Right cardiac atrium (tissue), 5 donors: ENCODE measurements at regions of chr14 and their contacts with region 1.

Region 1: GRCh38 chr14:38721822-38722431 is 381.1 kb downstream of the SEC23A start:
- DNase-seq: peak; percentile 38 to 79 (median 47)
- ATAC-seq: peak; percentile 79 to 84
- H3K4me3 ChIP-seq: no peak overlapping the region
- H3K27ac ChIP-seq: no peak overlapping the region
- H3K4me1 ChIP-seq: no peaks in the 10 kb centered on the region
- H3K27me3 ChIP-seq: no peaks in the 10 kb centered on the region

Region 2: GRCh38 chr14:38867561-38868150 is 145.7 kb after region 1 on chr14:
- intact Hi-C with region 1: loop called in 3 of 4 experiments (anchors 5 to 10 kb)
- DNase-seq: peak; percentile 58 to 79 (median 61)
- ATAC-seq: peak; percentile 89 to 90
- H3K4me3 ChIP-seq: no peak overlapping the region
- H3K27ac ChIP-seq: no peak overlapping the region
- H3K4me1 ChIP-seq: no peaks in the 10 kb centered on the region
- H3K27me3 ChIP-seq: no peaks in the 10 kb centered on the region

Region 3: DNA sequence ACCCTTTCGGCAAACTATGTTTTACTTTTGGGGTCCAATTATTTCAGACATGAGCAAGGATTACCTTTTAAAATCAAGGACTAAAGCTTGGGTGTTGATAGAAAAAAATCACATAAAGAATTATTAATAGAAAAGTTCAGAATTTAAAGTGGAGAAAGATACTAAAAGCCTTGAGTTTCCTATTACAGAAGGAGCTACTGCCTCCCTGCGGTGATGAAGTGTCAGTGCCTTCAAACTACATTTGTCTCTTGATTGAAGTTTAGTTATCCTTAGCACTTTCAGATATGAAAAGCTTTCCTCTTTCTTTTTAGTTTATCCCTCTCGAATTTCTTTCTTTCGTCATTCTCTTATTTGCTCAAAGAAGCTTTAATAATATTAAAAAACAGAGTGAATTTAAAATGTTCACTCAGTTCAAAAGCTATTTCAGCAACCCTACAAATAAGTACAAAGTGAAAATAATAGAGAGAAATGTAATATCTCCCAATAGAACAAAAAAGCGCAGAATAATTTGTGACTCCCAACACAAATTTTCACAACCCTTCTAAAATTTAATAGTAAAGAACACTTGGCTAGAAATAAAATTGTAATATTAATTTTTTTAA is 293.5 kb after region 1 on chr14:
- intact Hi-C with region 1: loop called in 3 of 4 experiments (anchors 5 kb)
- DNase-seq: no peak
- ATAC-seq: no peak
- H3K4me3 ChIP-seq: no peak overlapping the region
- H3K27ac ChIP-seq: no peak overlapping the region
- H3K4me1 ChIP-seq: no peaks in the 10 kb centered on the region
- H3K27me3 ChIP-seq: no peaks in the 10 kb centered on the region